Lower leg skin (tissue), 4 donors: ENCODE measurements at regions of chr10 and their contacts with region 1.

Region 1: DNA sequence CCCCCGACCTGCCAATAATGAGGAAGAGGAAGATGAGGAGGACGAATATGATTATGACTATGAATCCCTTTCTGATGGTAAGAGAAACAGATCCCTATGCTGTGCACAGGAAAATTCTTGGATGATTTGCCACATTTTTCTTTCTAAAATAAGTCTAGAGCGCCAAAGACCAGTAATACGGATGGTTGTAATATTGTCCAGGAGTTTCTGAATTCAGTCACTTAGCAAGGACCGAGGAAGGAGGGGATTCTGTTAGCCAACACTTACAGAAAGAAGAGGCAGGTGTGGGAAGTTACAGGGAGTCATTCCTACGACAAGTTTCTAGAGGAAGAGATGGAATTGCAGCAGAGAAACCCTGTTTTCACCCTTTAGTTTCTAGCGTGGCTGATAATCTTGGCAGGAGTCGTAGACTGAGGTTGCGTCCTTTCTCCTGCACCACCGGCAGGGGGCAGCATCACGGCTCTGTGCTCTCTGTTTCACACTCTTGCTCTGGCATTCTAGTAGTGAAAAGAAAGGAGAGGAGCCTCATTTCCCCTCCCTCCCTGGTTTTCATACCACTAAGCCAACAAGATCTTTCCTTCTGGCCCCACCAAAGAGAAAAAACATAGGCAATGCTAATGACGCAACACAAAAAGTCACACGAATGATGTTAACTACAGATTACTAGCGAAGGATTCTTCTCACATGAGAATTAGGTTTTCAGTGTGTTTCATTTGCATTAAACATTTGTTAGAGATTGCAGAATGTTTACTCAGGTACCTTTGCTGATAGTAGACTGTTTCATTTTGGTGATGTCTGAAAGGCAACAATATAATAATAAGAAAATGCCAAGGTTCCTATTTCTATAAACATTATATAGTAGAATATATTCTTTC is 82.7 kb downstream of the NOC3L start:
- DNase-seq: no peak
- H3K4me3 ChIP-seq: no peak overlapping the region
- CTCF ChIP-seq: no peak
- POLR2A ChIP-seq: no peak

Region 2: DNA sequence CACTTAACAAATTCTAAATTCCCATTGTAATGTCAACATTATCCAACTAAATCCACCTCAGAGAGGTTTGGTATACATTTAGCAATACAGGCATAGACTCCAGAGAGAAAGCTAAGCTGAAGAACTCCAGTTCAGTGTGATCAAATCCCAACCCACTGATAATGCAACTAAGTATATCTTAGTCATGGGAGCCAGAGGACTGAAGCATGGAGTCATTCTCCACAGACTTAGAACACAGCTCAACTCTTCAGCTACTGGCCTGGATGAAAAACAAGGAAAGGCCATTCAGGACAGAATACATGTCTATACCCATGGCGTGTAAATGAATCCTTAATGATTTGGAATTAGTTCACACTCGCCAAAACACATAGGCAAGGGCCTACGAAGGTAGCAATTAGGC is 54.8 kb after region 1 on chr10:
- intact Hi-C with region 1: no loop called
- DNase-seq: no peak
- H3K4me3 ChIP-seq: no peak overlapping the region
- CTCF ChIP-seq: no peak
- POLR2A ChIP-seq: no peak

Region 3: DNA sequence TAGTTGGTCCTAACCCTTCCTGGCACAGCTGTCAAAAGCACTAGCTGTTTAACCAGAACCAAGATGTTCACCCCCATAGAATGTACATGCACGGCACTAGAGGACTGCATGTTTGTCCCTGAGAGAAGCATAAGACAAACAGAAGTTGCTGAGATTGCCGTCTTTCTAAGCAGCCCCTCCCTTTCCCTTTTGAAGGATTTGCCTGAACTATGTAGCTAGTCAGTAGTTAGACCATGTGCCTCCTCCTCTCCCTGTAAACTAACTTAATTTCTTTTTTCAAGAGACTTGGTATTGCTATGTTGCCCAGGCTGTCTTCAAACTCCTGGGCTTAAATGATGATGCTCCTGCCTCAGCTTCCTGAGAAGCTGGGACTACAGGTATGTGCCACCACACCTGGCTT is 163.0 kb after region 1 on chr10:
- intact Hi-C with region 1: loop called (anchors 5 kb)
- DNase-seq: no peak
- H3K4me3 ChIP-seq: no peak overlapping the region
- CTCF ChIP-seq: no peak
- POLR2A ChIP-seq: no peak

Region 4: DNA sequence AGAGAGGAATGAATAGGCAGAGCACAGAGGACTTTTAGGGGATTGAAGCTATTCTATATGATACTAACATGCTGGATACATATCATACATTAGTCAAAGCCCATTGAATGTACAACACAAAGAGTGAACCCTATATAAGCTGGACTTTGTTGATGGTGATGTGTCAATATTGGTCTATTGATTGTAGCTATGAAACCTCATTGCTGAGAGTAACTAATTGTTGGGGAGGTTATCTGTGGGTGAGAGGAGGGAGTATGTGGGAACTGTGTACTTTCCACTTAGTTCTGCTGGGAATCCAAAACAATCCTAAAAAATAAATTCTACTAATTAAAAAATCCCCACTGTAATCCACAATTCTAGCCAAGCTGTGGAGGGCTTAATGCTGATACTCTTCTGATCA is 636.4 kb after region 1 on chr10:
- intact Hi-C with region 1: no loop called
- DNase-seq: no peak
- H3K4me3 ChIP-seq: no peak overlapping the region
- CTCF ChIP-seq: no peak
- POLR2A ChIP-seq: no peak